Activated naive CD4-positive, alpha-beta T cell treated with anti-CD3 and anti-CD28 coated beads for 36 hours (primary cell): ENCODE measurements at regions of chr3 and their contacts with region 1.

Region 1: DNA sequence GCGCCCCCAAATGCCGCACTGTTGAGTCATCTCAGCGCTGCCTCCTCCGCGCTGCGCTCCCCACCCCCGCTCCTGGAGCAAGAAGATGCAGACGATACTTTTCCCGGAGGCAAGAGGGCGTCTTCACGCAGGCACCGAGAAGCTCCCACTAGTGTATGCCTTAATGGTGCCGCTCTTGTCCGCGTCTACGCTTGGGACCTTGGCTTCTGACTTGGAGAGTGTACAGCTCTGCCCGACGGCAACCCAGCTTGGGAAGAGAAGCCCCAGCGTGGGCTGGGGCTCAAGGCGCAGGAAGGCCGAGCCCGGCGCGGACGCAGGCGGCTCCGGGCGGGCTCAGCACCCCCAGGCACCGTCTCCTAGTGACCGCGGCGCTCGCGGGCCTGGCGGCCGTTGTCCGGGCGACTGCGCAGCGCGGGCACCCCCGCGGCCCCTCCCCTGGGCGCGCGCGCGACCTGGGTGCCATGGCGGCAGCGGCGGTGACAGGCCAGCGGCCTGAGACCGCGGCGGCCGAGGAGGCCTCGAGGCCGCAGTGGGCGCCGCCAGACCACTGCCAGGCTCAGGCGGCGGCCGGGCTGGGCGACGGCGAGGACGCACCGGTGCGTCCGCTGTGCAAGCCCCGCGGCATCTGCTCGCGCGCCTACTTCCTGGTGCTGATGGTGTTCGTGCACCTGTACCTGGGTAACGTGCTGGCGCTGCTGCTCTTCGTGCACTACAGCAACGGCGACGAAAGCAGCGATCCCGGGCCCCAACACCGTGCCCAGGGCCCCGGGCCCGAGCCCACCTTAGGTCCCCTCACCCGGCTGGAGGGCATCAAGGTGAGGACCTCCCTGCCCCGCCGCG is at the start of gene P4HTM:
- DNase-seq: peak; percentile 88
- H3K4me3 Mint-ChIP-seq: peak within 1 kb of the TSS; percentile 94
- H3K27ac Mint-ChIP-seq: peak within 1 kb of the TSS; percentile 93
- H3K4me1 Mint-ChIP-seq: peaks cover 36% of the 10 kb centered on the region
- H3K27me3 Mint-ChIP-seq: no peaks in the 10 kb centered on the region
- total RNA-seq, gene P4HTM: 20.2 to 21.7 TPM

Region 2: DNA sequence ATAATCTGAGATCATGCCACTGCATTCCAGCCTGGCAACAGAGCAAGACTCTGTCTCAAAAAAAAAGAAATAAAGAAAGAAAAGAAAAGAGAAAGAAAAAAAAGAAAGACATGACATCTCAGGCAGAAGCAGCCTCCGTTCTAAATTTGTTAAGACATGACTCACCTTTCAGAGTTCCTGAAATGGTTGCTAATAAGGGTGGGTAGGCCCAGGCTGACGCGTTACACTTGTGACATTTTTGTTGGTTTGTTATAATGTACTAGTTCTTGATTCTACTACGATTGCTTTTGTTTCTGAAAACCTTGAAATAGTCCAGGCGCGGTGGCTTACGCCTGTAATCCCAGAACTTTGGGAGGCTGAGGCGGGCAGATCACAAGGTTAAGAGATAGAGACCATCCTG is 112.3 kb before region 1 on chr3:
- CTCF ChIA-PET with region 1: no interaction called
- intact Hi-C with region 1: no loop called
- DNase-seq: no peak
- H3K4me3 Mint-ChIP-seq: no peak overlapping the region
- H3K27ac Mint-ChIP-seq: no peak overlapping the region
- H3K4me1 Mint-ChIP-seq: no peaks in the 10 kb centered on the region
- H3K27me3 Mint-ChIP-seq: no peaks in the 10 kb centered on the region

Region 3: GRCh38 chr3:49007068-49007770 is 17.2 kb after region 1 on chr3 and contains the start of gene WDR6:
- CTCF ChIA-PET with region 1: interaction called, 23 read pairs
- intact Hi-C with region 1: loop called (anchors 1 kb)
- DNase-seq: peak; percentile 99
- H3K4me3 Mint-ChIP-seq: peak within 1 kb of the TSS; percentile 99
- H3K27ac Mint-ChIP-seq: peak within 1 kb of the TSS; percentile 99
- H3K4me1 Mint-ChIP-seq: peaks cover 19% of the 10 kb centered on the region
- H3K27me3 Mint-ChIP-seq: no peaks in the 10 kb centered on the region
- total RNA-seq, gene WDR6: 119 to 120 TPM

Region 4: DNA sequence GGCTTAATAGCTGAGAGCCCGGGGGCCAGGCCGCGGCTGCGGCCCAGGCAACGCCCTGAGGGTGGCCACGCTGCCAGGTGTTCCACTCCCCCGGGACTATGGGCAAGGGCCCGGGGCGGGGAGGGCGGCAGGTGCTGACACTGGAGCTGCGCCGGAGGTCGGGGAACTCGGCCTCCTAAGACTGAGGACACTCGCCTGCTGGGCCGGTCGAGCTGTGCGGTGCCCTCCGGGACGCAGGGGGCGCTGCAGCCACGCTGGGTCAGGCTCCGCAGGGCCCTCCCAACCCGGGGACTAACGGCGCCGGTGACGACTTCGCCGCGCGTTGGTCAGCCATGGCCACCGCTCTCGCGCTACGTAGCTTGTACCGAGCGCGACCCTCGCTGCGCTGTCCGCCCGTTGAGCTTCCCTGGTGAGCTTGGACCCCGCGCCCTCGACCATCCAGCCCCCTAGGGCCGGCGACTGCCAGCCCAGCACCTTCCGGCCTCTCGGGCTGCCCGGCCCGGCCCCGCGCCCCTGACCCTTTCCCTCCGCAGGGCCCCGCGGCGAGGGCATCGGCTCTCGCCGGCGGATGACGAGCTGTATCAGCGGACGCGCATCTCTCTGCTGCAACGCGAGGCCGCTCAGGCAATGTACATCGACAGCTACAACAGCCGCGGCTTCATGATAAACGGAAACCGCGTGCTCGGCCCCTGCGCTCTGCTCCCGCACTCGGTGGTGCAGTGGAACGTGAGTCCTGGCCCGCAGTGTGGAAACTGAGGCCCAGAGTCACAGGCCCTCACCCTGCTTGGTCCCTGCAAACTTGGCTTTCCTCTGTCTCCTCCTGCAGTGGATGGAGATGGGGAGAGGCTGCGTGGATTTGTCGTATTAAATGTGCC is 32.0 kb after region 1 on chr3 and contains the start of gene NDUFAF3:
- CTCF ChIA-PET with region 1: interaction called, 36 read pairs
- intact Hi-C with region 1: loop called (anchors 1 kb)
- DNase-seq: peak; percentile 95
- H3K4me3 Mint-ChIP-seq: peak within 1 kb of the TSS; percentile 96
- H3K27ac Mint-ChIP-seq: peak within 1 kb of the TSS; percentile 97
- H3K4me1 Mint-ChIP-seq: peaks cover 60% of the 10 kb centered on the region
- H3K27me3 Mint-ChIP-seq: no peaks in the 10 kb centered on the region
- total RNA-seq, gene NDUFAF3: 113 to 115 TPM

Region 5: DNA sequence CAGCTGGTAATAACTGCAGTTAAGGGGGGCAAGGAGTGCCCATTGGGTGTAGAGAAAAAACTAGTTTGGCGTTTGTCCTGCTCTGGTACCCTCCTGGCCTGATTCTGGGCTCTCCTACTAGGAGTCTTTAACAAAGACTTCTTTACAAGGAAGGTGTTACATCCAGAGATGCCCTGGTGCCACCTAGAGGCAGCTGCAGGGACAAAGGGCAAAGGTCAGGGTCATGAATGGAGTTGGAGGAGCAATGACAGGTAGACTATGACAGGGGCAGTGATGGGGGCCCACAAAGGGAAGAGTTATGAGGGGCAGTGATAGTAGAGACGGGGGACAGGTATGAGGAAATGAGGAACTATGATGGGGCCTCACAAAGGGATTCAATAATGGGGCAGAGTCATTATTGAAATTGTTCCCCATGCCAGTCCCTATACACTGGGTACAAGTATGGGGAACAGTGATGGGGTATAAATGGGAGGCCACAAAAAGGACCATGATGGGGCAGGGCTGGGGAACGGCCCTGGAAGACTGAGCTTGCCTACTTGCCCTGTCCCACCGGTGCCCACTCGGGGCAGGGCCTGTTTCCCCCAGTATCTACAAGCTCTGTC is 168.2 kb after region 1 on chr3:
- CTCF ChIA-PET with region 1: interaction called, 18 read pairs
- intact Hi-C with region 1: loop called (anchors 1 kb)
- DNase-seq: peak; percentile 85
- H3K4me3 Mint-ChIP-seq: no peak overlapping the region
- H3K27ac Mint-ChIP-seq: no peak overlapping the region
- H3K4me1 Mint-ChIP-seq: peaks cover 10% of the 10 kb centered on the region
- H3K27me3 Mint-ChIP-seq: no peaks in the 10 kb centered on the region

Region 6: DNA sequence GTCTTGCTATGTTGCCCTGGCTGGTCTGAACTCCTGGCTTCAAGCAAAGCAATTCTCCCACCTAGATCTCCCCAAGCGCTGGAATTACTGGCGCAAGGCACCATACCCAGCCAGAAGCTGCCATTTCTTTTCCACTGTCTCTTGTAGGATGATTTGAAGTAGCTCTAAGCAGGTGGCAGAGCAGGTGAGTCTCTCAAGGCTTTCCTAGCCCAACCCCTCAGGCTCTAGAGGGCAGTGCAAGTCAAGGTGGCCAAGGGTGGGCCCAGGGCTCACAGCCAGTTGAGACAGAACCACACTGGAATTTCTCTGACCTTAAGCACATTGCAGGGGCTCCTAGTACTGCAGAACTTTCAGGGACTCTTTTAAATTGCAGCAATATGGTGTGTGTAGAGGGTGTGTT is 464.4 kb after region 1 on chr3:
- CTCF ChIA-PET with region 1: interaction called, 5 read pairs
- intact Hi-C with region 1: loop called (anchors 1 kb)
- DNase-seq: peak; percentile 30
- H3K4me3 Mint-ChIP-seq: no peak overlapping the region
- H3K27ac Mint-ChIP-seq: no peak overlapping the region
- H3K4me1 Mint-ChIP-seq: no peaks in the 10 kb centered on the region
- H3K27me3 Mint-ChIP-seq: no peaks in the 10 kb centered on the region